Left ventricle myocardium inferior (tissue), 1 donor: ENCODE measurements at regions of chr6 and their contacts with region 1.

Region 1: DNA sequence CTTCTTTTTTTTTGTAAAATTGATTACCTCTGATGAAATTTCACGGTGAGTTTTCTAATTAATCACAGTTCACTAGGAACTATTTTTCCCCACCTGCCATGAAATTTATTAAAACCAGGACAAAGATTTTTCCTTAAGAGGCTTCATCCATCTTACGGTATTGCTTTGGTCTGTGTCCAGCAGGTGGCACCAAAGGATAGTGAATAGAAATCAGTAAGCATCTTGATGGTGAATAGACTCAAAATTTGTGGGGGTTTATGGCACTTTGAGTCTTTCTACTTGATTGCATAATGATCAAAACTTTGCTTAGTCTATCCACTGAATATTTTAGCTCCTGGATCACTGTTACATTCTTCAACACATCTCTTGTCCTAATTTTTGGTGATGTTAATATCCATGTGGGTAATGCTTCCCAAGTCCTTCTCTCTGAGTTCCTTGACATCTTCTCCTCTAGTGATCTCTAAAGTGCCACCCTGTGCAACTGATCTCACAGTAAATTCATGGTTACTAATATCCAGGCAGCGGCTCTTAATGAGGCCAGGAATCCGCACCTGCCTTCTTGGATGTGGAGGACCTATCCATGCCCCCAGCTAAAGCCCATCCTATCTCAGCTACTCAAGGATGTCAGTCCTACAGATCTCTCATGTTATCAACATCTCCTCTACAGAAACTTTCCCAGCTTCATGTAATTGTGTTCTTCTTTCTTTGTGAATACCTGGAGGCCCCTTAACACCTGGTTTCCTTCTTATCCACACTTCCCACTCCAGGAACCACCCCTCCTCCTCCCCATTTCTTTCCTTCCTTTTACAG is 54.5 kb downstream of the STMND1 start:
- DNase-seq: peak; percentile 19
- H3K4me3 ChIP-seq: no peak overlapping the region
- H3K27ac ChIP-seq: no peak overlapping the region
- H3K4me1 ChIP-seq: no peaks in the 10 kb centered on the region
- H3K27me3 ChIP-seq: no peaks in the 10 kb centered on the region
- CTCF ChIP-seq: peak; percentile 85

Region 2: DNA sequence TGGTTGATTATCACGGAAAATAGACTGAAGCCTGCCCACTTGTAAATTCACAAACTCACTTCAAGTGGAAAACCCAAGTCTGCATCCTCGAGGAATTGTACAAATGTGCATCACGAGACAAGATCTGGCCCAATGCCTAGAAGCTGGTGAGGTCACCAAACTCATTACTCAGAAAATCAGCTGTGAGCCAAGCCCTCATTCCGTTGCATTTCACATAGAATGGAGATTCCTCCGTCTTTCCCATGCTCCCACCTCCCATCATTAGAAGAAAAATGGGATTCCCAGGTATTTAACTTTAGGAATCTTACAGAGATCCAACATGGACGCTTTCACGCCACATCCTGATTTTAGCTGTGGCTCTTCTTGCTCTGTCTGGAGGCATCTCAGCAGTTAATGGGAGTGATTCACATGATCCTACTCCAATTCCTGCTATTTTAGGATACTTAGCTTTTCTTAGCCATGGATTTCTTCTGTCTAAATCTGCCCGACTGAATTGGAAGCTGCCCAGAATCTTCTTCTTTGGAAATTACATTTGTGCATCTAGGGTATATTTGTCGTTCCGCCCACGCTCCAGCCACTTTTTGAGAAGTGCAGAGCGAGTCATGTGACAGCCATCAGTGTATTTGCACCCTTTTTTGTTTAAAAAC is 123.2 kb before region 1 on chr6:
- intact Hi-C with region 1: no loop called
- DNase-seq: peak; percentile 36
- H3K4me3 ChIP-seq: peak overlapping the region; percentile 38
- H3K27ac ChIP-seq: peak overlapping the region; percentile 36
- H3K4me1 ChIP-seq: peaks cover 24% of the 10 kb centered on the region
- H3K27me3 ChIP-seq: no peaks in the 10 kb centered on the region
- CTCF ChIP-seq: no peak

Region 3: DNA sequence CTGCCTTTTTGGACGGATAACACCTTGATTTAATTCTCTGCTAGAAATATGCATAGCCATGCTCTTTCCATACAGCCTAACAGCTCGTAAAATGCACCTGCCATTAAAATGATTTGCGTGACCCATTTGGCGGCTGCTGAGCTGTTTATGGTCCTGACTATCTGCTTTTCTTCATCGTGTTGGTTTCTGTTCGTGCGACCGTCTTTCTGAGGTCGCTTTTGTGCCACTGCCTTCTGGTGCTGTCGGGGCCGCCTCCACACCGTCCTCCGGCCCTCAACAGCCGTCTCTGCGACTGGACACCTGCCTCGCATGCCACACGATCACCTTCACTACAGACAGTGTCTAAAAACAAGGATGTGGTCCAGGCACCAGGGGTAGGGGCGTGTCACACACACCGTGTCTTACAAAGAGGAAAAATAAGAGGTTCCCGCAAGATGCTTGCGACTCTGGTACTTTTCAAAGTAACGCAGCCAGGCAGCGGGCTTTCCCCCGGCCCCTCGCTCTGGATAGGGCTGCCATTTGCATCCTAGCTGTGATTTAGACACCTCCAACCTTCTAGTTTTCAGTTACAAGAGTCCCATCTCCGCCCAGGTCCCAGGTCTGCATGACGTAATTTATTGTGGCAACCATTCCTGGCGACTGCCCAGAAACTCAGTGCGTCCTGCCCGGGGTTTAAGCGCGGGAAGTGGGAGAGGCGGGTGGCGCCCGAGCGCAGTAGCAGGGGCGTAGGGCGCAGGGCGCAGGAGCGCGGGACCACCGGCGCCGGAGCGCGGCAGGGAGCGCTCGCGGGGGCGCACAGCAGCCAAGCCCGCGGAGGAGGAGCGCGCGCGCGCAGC is 54.7 kb before region 1 on chr6 and contains the start of gene STMND1:
- intact Hi-C with region 1: no loop called
- DNase-seq: peak; percentile 25
- H3K4me3 ChIP-seq: peak within 1 kb of the TSS; percentile 67
- H3K27ac ChIP-seq: no peak within 1 kb of the TSS
- H3K4me1 ChIP-seq: peaks cover 30% of the 10 kb centered on the region
- H3K27me3 ChIP-seq: peaks cover 43% of the 10 kb centered on the region
- CTCF ChIP-seq: no peak
- total RNA-seq, gene STMND1: not detected

Region 4: GRCh38 chr6:17454316-17455005 is 298.1 kb after region 1 on chr6:
- intact Hi-C with region 1: loop called (anchors 10 kb)
- DNase-seq: no peak
- H3K4me3 ChIP-seq: no peak overlapping the region
- H3K27ac ChIP-seq: peak overlapping the region; percentile 50
- H3K4me1 ChIP-seq: peaks cover 16% of the 10 kb centered on the region
- H3K27me3 ChIP-seq: no peaks in the 10 kb centered on the region
- CTCF ChIP-seq: no peak

Region 5: GRCh38 chr6:17584241-17584803 is 428.0 kb after region 1 on chr6:
- intact Hi-C with region 1: loop called (anchors 5 kb)
- DNase-seq: no peak
- H3K4me3 ChIP-seq: peak overlapping the region; percentile 44
- H3K27ac ChIP-seq: peak overlapping the region; percentile 77
- H3K4me1 ChIP-seq: peaks cover 18% of the 10 kb centered on the region
- H3K27me3 ChIP-seq: no peaks in the 10 kb centered on the region
- CTCF ChIP-seq: peak; percentile 83